Naive thymus-derived CD4-positive, alpha-beta T cell (primary cell): ENCODE measurements at regions of chr7 and their contacts with region 1.

Region 1: DNA sequence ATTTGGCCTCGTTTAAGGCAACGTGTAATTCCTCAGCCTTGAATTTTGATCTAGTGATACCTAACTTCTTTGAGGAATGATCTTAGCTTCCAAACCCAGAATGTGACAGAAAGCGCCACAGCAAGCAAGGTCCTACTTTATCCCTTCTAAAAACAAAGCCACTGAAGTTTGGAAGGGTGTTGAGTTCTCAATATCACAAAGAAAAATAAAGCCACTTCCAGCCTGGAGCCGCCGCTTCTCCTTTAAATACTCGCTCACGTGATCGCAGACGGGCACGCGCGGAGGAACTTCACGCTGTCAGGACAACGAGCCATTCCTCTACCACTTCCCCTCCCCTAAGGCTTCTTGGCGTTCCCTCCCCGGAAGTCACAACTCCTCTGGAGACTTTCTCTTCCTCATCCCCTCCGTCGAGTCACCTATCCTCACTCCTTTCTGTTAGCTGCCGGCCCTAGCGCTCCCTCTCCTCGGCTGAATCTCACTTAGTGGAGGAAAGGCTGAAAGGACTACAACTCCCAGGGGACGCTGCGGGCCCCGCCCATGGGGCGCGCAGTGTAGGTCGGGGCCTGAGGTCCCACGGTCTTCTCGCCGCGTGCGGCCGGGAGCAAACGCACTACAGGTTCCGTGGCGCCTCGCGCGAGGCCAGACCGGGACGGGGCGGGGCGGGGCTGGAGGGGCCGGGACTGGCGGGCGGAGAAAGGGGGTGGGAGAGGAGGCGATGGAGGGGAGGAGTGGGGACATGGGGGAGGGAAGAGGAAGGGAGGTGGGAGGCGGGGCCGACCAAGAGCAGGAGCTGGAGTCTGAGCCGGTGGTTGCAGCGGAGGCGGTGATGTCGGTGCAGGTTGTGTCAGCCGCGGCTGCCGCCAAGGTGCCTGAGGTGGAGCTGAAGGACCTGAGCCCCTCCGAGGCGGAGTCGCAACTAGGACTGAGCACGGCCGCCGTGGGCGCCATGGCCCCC is at the start of gene AHCYL2:
- DNase-seq: peak; percentile 88 to 98 (median 95)
- ATAC-seq: peak; percentile 96
- H3K4me3 ChIP-seq: peak within 1 kb of the TSS; percentile 96
- H3K4me3 Mint-ChIP-seq: peak within 1 kb of the TSS; percentile 88 to 99 (median 96)
- H3K27ac ChIP-seq: peak within 1 kb of the TSS; percentile 85
- H3K27ac Mint-ChIP-seq: peak within 1 kb of the TSS; percentile 87 to 98 (median 95)
- H3K4me1 ChIP-seq: peaks cover 13 to 16% of the 10 kb centered on the region in 2 donors
- H3K4me1 Mint-ChIP-seq: peaks cover 27 to 63% (median 48%) of the 10 kb centered on the region in 7 donors
- H3K27me3 ChIP-seq: no peaks in the 10 kb centered on the region
- H3K27me3 Mint-ChIP-seq: no peaks in the 10 kb centered on the region
- total RNA-seq, gene AHCYL2: 14.4 to 22.2 (median 20.4) TPM

Region 2: DNA sequence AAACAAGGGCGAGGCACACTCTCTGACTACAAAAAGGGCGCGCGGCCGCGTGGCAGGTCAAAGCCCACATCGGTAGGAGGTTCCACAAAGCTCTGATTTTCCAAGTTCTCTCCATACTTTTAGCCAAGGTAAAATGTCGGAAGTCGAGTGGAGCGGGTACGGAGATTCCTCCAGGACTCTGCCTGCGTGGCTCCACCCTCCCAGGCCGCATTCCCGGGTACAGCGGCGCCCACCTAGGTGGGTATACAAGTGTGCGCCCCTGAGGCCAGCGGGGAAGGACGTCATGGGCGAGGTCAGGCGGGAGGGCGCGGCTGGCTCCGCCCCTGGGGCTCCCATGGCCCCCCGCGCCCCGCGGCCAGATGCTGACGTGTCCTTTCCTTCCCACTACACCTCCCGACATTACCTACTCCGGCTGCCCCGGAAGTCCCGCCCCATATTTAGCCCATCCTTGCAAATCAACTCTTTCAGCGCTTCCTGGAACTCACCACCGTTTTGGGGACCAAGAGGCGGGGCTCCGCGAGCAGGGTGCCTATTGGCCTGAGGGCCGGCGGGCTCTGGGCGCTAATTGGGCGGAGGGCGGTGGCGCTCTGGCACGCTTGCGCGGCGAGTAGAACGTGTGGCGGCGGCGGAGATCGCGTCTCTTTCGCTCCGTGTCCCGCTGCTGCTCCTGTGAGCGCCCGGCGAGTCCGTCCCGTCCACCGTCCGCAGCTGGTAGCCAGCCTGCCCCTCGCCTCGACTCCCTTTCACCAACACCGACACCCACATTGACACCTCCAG is 1572.8 kb before region 1 on chr7 and contains the start of gene SND1:
- CTCF ChIA-PET with region 1: no interaction called
- POLR2A ChIA-PET with region 1: no interaction called
- intact Hi-C with region 1: loop called in 1 of 2 experiments (anchors 2 kb)
- DNase-seq: peak; percentile 92 to 100 (median 98)
- ATAC-seq: peak; percentile 96
- H3K4me3 ChIP-seq: peak within 1 kb of the TSS; percentile 96
- H3K4me3 Mint-ChIP-seq: peak within 1 kb of the TSS in 6 of 10 donors; percentile 98 to 99 (median 98)
- H3K27ac ChIP-seq: peak within 1 kb of the TSS; percentile 86
- H3K27ac Mint-ChIP-seq: peak within 1 kb of the TSS in 5 of 9 donors; percentile 94 to 99 (median 98)
- H3K4me1 ChIP-seq: peaks cover 22 to 26% of the 10 kb centered on the region in 2 donors
- H3K4me1 Mint-ChIP-seq: peaks cover 5 to 55% (median 43%) of the 10 kb centered on the region in 7 donors
- H3K27me3 ChIP-seq: no peaks in the 10 kb centered on the region
- H3K27me3 Mint-ChIP-seq: peaks cover 0 to 4% (median 0%) of the 10 kb centered on the region in 5 donors
- total RNA-seq, gene SND1: 132 to 253 (median 163) TPM

Region 3: GRCh38 chr7:128739048-128739962 is 485.2 kb before region 1 on chr7 and contains the start of gene CALU:
- CTCF ChIA-PET with region 1: no interaction called
- POLR2A ChIA-PET with region 1: no interaction called
- intact Hi-C with region 1: loop called (anchors 1 kb)
- DNase-seq: peak; percentile 87 to 95 (median 94)
- ATAC-seq: peak; percentile 98
- H3K4me3 ChIP-seq: peak within 1 kb of the TSS; percentile 86
- H3K4me3 Mint-ChIP-seq: peak within 1 kb of the TSS; percentile 89 to 100 (median 97)
- H3K27ac ChIP-seq: peak within 1 kb of the TSS; percentile 85
- H3K27ac Mint-ChIP-seq: peak within 1 kb of the TSS; percentile 96 to 99 (median 98)
- H3K4me1 ChIP-seq: peaks cover 13% of the 10 kb centered on the region in 2 donors
- H3K4me1 Mint-ChIP-seq: peaks cover 11 to 52% (median 45%) of the 10 kb centered on the region in 7 donors
- H3K27me3 ChIP-seq: no peaks in the 10 kb centered on the region
- H3K27me3 Mint-ChIP-seq: peaks cover 0 to 5% (median 0%) of the 10 kb centered on the region in 5 donors
- total RNA-seq, gene CALU: 18.6 to 36.2 (median 22.6) TPM

Region 4: DNA sequence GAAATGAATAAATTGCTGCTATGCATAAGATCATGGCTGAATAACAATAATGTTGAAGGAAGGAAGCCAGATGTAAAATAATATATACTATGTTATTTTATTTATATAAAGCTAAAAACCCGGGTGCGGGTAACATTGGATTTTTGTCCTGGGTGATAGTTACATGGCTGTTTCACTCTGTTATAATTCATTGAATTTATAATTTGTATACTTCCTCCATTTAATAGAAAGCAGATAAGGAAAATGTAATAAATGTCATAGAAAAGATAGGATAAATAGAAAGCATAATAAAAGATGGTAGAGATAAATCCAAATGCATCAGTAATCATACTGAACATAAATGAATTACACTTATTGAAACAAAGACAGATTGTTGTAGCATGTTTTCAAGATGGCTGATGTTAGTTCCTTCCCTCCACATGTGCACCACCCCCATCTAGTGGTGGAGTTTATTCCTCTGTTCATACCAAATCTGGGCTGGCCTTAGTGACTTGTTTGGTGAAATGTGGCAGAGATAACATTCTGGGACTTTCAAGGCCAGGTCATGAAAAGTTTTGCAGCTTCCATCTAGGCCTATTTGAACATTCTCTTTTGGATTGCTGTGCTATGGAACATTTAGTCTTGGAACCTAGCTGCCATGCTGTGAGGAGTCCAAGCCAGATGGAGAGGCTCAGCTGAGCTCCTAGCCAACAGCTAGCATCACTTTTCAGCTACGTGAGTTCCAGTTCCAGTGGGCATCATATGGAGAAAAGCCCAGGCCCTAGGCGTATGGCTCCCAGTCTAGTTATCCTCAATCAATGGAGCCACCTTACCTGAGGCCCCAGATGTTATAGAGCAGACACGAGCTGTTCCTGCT is 47.2 kb after region 1 on chr7:
- CTCF ChIA-PET with region 1: interaction called, 159 read pairs
- POLR2A ChIA-PET with region 1: interaction called, 6 read pairs
- intact Hi-C with region 1: loop called in 1 of 2 experiments (anchors 1 kb)
- DNase-seq: peak; percentile 18 to 80 (median 74)
- ATAC-seq: peak; percentile 98
- H3K4me3 ChIP-seq: no peak overlapping the region
- H3K4me3 Mint-ChIP-seq: peak overlapping the region in 8 of 10 donors; percentile 25 to 75 (median 60)
- H3K27ac ChIP-seq: no peak overlapping the region
- H3K27ac Mint-ChIP-seq: peak overlapping the region in 3 of 9 donors; percentile 50 to 86 (median 73)
- H3K4me1 ChIP-seq: no peaks in the 10 kb centered on the region
- H3K4me1 Mint-ChIP-seq: peaks cover 7 to 20% (median 11%) of the 10 kb centered on the region in 7 donors
- H3K27me3 ChIP-seq: no peaks in the 10 kb centered on the region
- H3K27me3 Mint-ChIP-seq: no peaks in the 10 kb centered on the region

Region 5: GRCh38 chr7:129433847-129434674 is 209.5 kb after region 1 on chr7 and contains the start of gene STRIP2:
- CTCF ChIA-PET with region 1: no interaction called
- POLR2A ChIA-PET with region 1: no interaction called
- intact Hi-C with region 1: loop called (anchors 1 kb)
- DNase-seq: peak; percentile 77 to 97 (median 86)
- ATAC-seq: peak; percentile 98
- H3K4me3 ChIP-seq: peak within 1 kb of the TSS; percentile 85
- H3K4me3 Mint-ChIP-seq: peak within 1 kb of the TSS; percentile 90 to 98 (median 93)
- H3K27ac ChIP-seq: peak within 1 kb of the TSS; percentile 52
- H3K27ac Mint-ChIP-seq: peak within 1 kb of the TSS; percentile 11 to 91 (median 69)
- H3K4me1 ChIP-seq: peaks cover 6 to 14% of the 10 kb centered on the region in 2 donors
- H3K4me1 Mint-ChIP-seq: peaks cover 9 to 43% (median 17%) of the 10 kb centered on the region in 7 donors
- H3K27me3 ChIP-seq: peaks cover 4 to 6% of the 10 kb centered on the region in 2 donors
- H3K27me3 Mint-ChIP-seq: peaks cover 8 to 34% (median 29%) of the 10 kb centered on the region in 5 donors
- total RNA-seq, gene STRIP2: 0.14 to 21.4 (median 0.27) TPM in 4 of 5 experiments, not detected in the other

Region 6: GRCh38 chr7:129825496-129826267 is 601.2 kb after region 1 on chr7:
- CTCF ChIA-PET with region 1: no interaction called
- POLR2A ChIA-PET with region 1: no interaction called
- intact Hi-C with region 1: loop called (anchors 1 to 10 kb)
- DNase-seq: peak; percentile 66 to 97 (median 82)
- ATAC-seq: peak; percentile 95
- H3K4me3 ChIP-seq: peak overlapping the region; percentile 74
- H3K4me3 Mint-ChIP-seq: peak overlapping the region; percentile 80 to 97 (median 88)
- H3K27ac ChIP-seq: no peak overlapping the region
- H3K27ac Mint-ChIP-seq: peak overlapping the region in 7 of 9 donors; percentile 33 to 85 (median 71)
- H3K4me1 ChIP-seq: no peaks in the 10 kb centered on the region
- H3K4me1 Mint-ChIP-seq: peaks cover 12 to 25% (median 19%) of the 10 kb centered on the region in 7 donors
- H3K27me3 ChIP-seq: no peaks in the 10 kb centered on the region
- H3K27me3 Mint-ChIP-seq: peaks cover 0 to 8% (median 0%) of the 10 kb centered on the region in 5 donors